ENCODE measurements at regions of chr6 and their contacts with region 1.

Region 1: GRCh38 chr6:158686791-158687381 is 37.0 kb downstream of the SYTL3 start:
- DNase-seq: no peak
- H3K4me3 ChIP-seq: no peak overlapping the region
- H3K27ac ChIP-seq: no peak overlapping the region
- H3K4me1 ChIP-seq: peaks cover 4% of the 10 kb centered on the region
- H3K27me3 ChIP-seq: no peaks in the 10 kb centered on the region
- CTCF ChIP-seq: no peak
- EP300 ChIP-seq: no peak
- POLR2A ChIP-seq: no peak

Region 2: DNA sequence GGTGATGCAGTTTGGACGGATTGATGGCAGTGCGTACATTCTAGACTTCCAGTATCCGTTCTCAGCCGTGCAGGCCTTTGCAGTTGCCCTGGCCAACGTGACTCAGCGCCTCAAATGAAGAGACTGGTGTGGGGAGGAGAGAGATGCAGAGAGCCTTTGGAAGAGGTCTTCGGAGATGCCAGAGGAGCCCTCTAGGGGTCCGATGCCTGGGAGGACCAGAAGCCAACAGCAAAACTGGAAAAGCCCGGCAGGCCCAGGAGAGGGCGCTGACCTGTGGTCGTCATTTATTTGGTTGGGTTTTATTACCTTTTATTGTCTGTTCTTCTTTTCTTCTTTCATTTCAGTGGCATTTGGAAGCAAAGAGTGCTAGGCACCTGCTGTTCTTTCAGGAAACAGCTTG is 180.3 kb before region 1 on chr6:
- intact Hi-C with region 1: no loop called
- DNase-seq: no peak
- H3K4me3 ChIP-seq: no peak overlapping the region
- H3K27ac ChIP-seq: no peak overlapping the region
- H3K4me1 ChIP-seq: no peaks in the 10 kb centered on the region
- H3K27me3 ChIP-seq: no peaks in the 10 kb centered on the region
- CTCF ChIP-seq: no peak
- EP300 ChIP-seq: no peak
- POLR2A ChIP-seq: no peak

Region 3: GRCh38 chr6:158605266-158605878 is 81.5 kb before region 1 on chr6:
- intact Hi-C with region 1: loop called in 1 of 4 experiments (anchors 10 kb)
- DNase-seq: peak in 4 of 5 donors; percentile 50 to 72 (median 64)
- H3K4me3 ChIP-seq: no peak overlapping the region
- H3K27ac ChIP-seq: no peak overlapping the region
- H3K4me1 ChIP-seq: peaks cover 2% of the 10 kb centered on the region
- H3K27me3 ChIP-seq: no peaks in the 10 kb centered on the region
- CTCF ChIP-seq: peak; percentile 61 to 67 (median 65)
- EP300 ChIP-seq: no peak
- POLR2A ChIP-seq: no peak

Region 4: GRCh38 chr6:158752613-158753012 is 65.7 kb after region 1 on chr6:
- intact Hi-C with region 1: no loop called
- DNase-seq: no peak
- H3K4me3 ChIP-seq: no peak overlapping the region
- H3K27ac ChIP-seq: no peak overlapping the region
- H3K4me1 ChIP-seq: no peaks in the 10 kb centered on the region
- H3K27me3 ChIP-seq: no peaks in the 10 kb centered on the region
- CTCF ChIP-seq: no peak
- EP300 ChIP-seq: no peak
- POLR2A ChIP-seq: no peak

Region 5: GRCh38 chr6:158999666-159000403 is 312.9 kb after region 1 on chr6 and contains the start of gene RSPH3:
- intact Hi-C with region 1: no loop called
- DNase-seq: peak; percentile 94 to 97 (median 95)
- H3K4me3 ChIP-seq: peak within 1 kb of the TSS; percentile 72
- H3K27ac ChIP-seq: peak within 1 kb of the TSS; percentile 43 to 78
- H3K4me1 ChIP-seq: no peaks in the 10 kb centered on the region
- H3K27me3 ChIP-seq: no peaks in the 10 kb centered on the region
- CTCF ChIP-seq: peak in 2 of 3 donors; percentile 11 to 25
- EP300 ChIP-seq: no peak
- POLR2A ChIP-seq: peak; percentile 38
- total RNA-seq, gene RSPH3: 4.5 to 9.3 (median 7.6) TPM